MCF 10A (cell line): ENCODE measurements at regions of chr10 and their contacts with region 1.

Region 1: DNA sequence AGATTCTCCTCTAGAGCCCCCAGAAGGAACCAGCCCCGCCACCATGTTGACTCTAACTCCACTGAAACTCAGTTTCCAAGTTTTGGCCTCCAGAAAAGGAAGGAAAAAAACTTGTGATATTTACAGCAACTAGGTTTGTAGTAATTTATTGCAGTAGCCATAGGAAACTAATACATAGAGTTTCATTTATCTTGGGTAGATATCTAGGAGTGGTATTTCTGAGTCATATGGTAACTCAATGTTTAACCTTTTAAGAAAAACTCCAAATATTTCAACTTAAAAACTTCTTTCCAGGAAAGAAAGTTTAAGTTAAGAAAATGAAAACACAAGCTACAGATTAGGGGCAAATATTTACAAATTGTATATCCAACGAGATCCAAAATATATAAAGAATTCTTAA is 576.7 kb downstream of the KCNMA1 start:
- DNase-seq: no peak
- H3K4me3 Mint-ChIP-seq: no peak overlapping the region
- H3K27ac Mint-ChIP-seq: no peak overlapping the region
- H3K4me1 Mint-ChIP-seq: peaks cover 7% of the 10 kb centered on the region
- H3K27me3 Mint-ChIP-seq: no peaks in the 10 kb centered on the region
- CTCF ChIP-seq: no peak

Region 2: DNA sequence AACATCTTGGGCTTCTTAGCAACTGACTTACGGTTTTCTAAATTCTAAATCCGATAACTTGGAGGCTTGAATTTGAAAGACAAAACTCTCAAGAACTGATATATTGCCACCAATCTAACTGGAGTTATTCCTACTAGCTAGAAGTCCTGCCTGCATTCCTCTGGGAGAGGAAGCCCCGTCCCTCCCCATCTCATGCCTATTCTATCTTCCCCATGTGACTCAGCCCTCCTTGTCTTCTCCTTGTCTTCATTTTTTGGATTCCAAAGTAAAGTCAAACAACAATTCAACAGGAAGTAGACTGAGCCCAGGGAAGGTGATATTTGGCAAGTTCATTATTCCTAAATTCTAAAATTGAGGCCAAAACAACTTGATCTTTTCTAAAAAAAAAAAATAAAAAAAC is 11.0 kb before region 1 on chr10:
- CTCF ChIA-PET with region 1: interaction called, 10 read pairs
- POLR2A ChIA-PET with region 1: no interaction called
- intact Hi-C with region 1: no loop called
- DNase-seq: no peak
- H3K4me3 Mint-ChIP-seq: no peak overlapping the region
- H3K27ac Mint-ChIP-seq: no peak overlapping the region
- H3K4me1 Mint-ChIP-seq: no peaks in the 10 kb centered on the region
- H3K27me3 Mint-ChIP-seq: no peaks in the 10 kb centered on the region
- CTCF ChIP-seq: no peak